ENCODE measurements at regions of chrX and their contacts with region 1.

Region 1: GRCh38 chrX:8591501-8591900 is 126.9 kb downstream of the VCX3B start:
- DNase-seq: no peak
- H3K4me3 ChIP-seq: no peak overlapping the region
- H3K27ac ChIP-seq: no peak overlapping the region
- H3K4me1 ChIP-seq: no peaks in the 10 kb centered on the region
- H3K27me3 ChIP-seq: no peaks in the 10 kb centered on the region
- CTCF ChIP-seq: no peak
- POLR2A ChIP-seq: no peak

Region 2: GRCh38 chrX:8607326-8607725 is 15.8 kb after region 1 on chrX:
- intact Hi-C with region 1: loop called (anchors 1 kb)
- DNase-seq: no peak
- H3K4me3 ChIP-seq: no peak overlapping the region
- H3K27ac ChIP-seq: no peak overlapping the region
- H3K4me1 ChIP-seq: no peaks in the 10 kb centered on the region
- H3K27me3 ChIP-seq: no peaks in the 10 kb centered on the region
- CTCF ChIP-seq: no peak
- POLR2A ChIP-seq: no peak

Measured in breast epithelium (tissue), 4 donors.